Right cardiac atrium (tissue), 5 donors: ENCODE measurements at regions of chr1 and their contacts with region 1.

Region 1: DNA sequence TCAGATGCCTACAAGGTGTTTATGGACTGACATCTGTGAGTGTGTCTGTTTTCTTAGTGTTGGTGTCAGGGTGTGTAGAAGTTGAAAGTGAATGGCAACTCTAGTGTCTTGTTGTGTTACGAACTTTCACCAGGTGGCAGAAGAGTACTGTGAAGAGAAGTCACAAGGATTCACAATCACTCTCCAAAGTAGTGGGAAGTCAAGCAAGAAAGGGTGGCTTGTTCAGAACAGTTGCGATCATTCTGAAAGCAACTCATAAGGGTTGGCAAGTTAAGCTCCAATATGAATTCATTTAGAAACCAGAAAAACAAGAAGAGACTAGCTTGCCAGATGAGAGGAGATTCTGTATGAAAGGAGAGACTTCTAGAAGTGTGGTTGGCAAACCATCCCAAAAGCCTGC is 86.1 kb downstream of the FASLG start:
- DNase-seq: no peak
- ATAC-seq: peak; percentile 70 to 82
- H3K4me3 ChIP-seq: no peak overlapping the region
- H3K27ac ChIP-seq: no peak overlapping the region
- H3K4me1 ChIP-seq: peaks cover 5% of the 10 kb centered on the region
- H3K27me3 ChIP-seq: no peaks in the 10 kb centered on the region

Region 2: GRCh38 chr1:172809750-172810149 is 64.7 kb after region 1 on chr1:
- intact Hi-C with region 1: no loop called
- DNase-seq: no peak
- ATAC-seq: no peak
- H3K4me3 ChIP-seq: no peak overlapping the region
- H3K27ac ChIP-seq: no peak overlapping the region
- H3K4me1 ChIP-seq: no peaks in the 10 kb centered on the region
- H3K27me3 ChIP-seq: no peaks in the 10 kb centered on the region

Region 3: GRCh38 chr1:173149887-173150286 is 404.9 kb after region 1 on chr1:
- intact Hi-C with region 1: no loop called
- DNase-seq: no peak
- ATAC-seq: peak; percentile 80 to 87
- H3K4me3 ChIP-seq: no peak overlapping the region
- H3K27ac ChIP-seq: no peak overlapping the region
- H3K4me1 ChIP-seq: no peaks in the 10 kb centered on the region
- H3K27me3 ChIP-seq: no peaks in the 10 kb centered on the region

Region 4: DNA sequence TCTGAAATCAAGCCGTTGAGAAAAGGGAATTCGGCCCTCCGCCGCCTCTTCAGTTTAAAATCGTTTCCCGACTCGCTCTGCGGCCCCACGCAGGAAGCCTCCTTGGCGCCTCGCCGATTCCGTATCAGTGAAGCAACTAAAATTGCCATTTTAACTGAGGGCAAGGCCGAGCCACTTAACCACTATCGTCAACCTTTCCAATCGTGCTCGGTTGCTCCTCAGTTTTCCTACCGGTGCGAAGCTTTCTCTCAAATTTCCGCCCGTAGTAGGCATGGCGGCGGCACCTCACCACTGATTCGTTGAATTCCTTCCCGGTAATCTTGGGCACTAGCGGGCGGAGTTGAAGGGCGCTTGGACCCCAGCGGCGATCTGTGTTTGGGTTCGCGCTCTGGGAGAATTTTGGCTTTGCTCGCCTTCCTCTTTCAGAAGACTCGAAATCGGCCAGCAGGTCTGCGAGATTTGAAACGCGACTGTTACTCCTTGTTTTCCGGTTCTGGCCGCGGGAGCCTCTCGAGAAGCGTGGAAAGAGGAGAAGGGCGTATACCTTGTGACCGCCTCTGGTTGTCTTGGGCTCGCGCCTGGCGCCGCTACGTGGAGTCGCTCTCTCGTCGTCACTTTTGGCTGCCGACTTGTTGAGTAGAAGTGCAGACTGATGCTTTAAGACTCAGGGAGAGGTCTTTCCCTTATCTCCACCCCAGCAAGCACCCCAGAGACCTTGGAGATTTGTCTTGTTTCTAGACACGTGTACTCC is 1079.5 kb after region 1 on chr1 and contains the starts of genes CENPL and DARS2:
- intact Hi-C with region 1: loop called in 1 of 4 experiments (anchors 10 kb)
- DNase-seq: peak; percentile 97 to 99 (median 97)
- ATAC-seq: peak; percentile 98 to 99
- H3K4me3 ChIP-seq: peak within 1 kb of the TSS; percentile 88
- H3K27ac ChIP-seq: peak within 1 kb of the TSS; percentile 99
- H3K4me1 ChIP-seq: no peaks in the 10 kb centered on the region
- H3K27me3 ChIP-seq: no peaks in the 10 kb centered on the region
- total RNA-seq, gene CENPL: 3.0 to 4.3 (median 3.9) TPM
- total RNA-seq, gene DARS2: 11.7 to 13.6 (median 13.1) TPM